ENCODE measurements at regions of chr17 and their contacts with region 1.

Region 1: GRCh38 chr17:2401426-2402221 is 764 bp upstream of the MNT start:
- DNase-seq: peak; percentile 100

Region 2: GRCh38 chr17:2323629-2324314 is 77.9 kb before region 1 on chr17:
- intact Hi-C with region 1: no loop called
- DNase-seq: no peak

Region 3: DNA sequence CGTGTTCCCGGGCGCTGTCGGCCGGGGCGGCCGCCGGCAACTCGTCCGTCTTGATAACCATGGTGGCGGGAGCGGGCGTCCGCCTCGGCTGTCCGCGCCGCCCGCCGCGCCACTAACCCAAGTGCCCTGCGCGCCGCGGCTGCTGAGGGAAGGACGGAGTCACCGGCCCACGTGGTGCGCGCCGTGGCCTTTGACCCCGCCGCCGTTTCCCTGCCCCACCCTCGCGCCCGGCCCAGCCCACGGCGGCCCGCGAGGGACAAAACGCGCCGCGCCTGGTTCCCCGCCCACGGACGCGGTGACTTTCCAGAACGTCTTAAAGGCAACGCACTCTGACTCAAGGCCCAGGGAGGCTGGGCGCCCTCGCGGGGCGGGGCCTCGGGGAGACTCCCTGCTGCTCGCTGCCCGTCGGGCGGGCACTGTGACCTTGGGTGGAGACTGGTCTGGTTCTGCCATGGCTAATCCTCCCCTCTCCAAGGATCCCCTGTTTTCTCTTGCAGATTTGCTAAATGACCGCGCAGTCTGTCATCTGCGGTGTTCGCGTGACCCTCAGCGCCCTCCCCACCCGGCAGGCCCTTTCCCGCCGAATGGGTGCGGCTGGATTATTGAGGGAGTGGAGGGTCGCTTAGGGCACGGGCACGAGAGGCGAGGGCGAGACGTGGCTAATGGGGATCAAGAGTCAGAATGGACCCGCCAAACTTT is 310.1 kb after region 1 on chr17 and contains the start of gene CLUH:
- intact Hi-C with region 1: loop called (anchors 2 kb)
- DNase-seq: peak; percentile 98
- total RNA-seq, gene CLUH: 143 TPM

Measured in cardiac septum (tissue), 1 donor.